Esophagus squamous epithelium (tissue), 5 donors: ENCODE measurements at regions of chr4 and their contacts with region 1.

Region 1: DNA sequence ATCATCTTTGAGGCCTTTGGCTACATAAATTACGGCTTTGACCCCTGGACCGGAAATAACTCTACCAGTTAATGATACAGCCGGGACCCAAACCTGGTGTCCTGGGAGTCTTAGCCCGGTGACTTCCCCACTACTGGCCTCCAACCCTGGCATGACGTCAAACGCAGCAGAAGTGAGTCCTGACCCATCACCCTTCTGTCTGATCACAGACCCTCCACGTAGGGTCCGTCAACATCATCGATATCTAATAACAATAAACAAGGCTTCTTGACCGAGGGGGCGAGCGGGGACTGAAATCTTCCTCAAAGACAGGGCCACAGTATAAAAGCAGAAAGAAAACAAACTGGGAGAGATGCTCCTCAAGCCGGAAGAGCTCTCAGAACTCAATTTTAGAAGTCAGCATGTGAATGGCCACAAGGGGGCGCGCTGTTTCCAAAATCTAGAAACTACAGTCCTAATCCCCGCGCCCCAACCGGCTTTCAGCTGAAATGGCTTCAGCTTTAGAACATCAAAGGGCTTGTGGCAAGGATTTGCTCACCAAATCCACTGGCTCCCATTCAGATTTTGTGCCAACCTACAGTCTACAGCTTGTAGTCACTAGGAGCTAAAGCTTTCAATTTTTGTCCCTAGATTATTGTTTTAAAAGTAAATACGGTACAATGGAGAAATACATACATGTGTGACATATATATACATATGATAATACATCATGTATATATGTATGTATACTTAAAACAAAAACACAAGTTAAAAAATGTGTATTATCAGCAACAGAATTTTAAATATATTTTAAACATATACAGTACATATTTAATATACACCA is 46.4 kb upstream of the ENPP6 start:
- DNase-seq: peak; percentile 56
- H3K4me3 ChIP-seq: no peak overlapping the region
- H3K27ac ChIP-seq: no peak overlapping the region
- H3K4me1 ChIP-seq: peaks cover 0 to 18% (median 15%) of the 10 kb centered on the region in 3 donors
- H3K27me3 ChIP-seq: no peaks in the 10 kb centered on the region
- CTCF ChIP-seq: peak; percentile 91 to 96 (median 93)
- POLR2A ChIP-seq: no peak

Region 2: GRCh38 chr4:185096032-185096653 is 832.0 kb after region 1 on chr4:
- intact Hi-C with region 1: loop called (anchors 10 kb)
- DNase-seq: no peak
- H3K4me3 ChIP-seq: no peak overlapping the region
- H3K27ac ChIP-seq: no peak overlapping the region
- H3K4me1 ChIP-seq: no peaks in the 10 kb centered on the region
- H3K27me3 ChIP-seq: peaks cover 0 to 14% (median 0%) of the 10 kb centered on the region in 4 donors
- CTCF ChIP-seq: peak in 5 of 6 experiments; percentile 26 to 62 (median 55)
- POLR2A ChIP-seq: no peak